WTC11 (cell line): ENCODE measurements at regions of chr2 and their contacts with region 1.

Region 1: GRCh38 chr2:230987137-230988020 is 8.5 kb upstream of the SPATA3 start:
- DNase-seq: peak; percentile 92
- ATAC-seq: peak; percentile 78
- H3K4me3 Mint-ChIP-seq: peak overlapping the region; percentile 61
- H3K27ac Mint-ChIP-seq: peak overlapping the region; percentile 58
- H3K4me1 Mint-ChIP-seq: peaks cover 24% of the 10 kb centered on the region
- H3K27me3 Mint-ChIP-seq: no peaks in the 10 kb centered on the region
- CTCF ChIP-seq: peak; percentile 93

Region 2: GRCh38 chr2:230824406-230824978 is 162.9 kb before region 1 on chr2:
- CTCF ChIA-PET with region 1: interaction called, 81 read pairs
- POLR2A ChIA-PET with region 1: interaction called, 3 read pairs
- DNase-seq: peak; percentile 59
- ATAC-seq: peak; percentile 89
- H3K4me3 Mint-ChIP-seq: no peak overlapping the region; the same call in 1 of the 2 replicates
- H3K27ac Mint-ChIP-seq: no peak overlapping the region
- H3K4me1 Mint-ChIP-seq: peaks cover 11% of the 10 kb centered on the region
- H3K27me3 Mint-ChIP-seq: peaks cover 5% of the 10 kb centered on the region; the same call in 1 of the 2 replicates
- CTCF ChIP-seq: peak; percentile 70

Region 3: GRCh38 chr2:230866756-230867523 is 120.4 kb before region 1 on chr2:
- CTCF ChIA-PET with region 1: interaction called, 17 read pairs
- POLR2A ChIA-PET with region 1: interaction called, 3 read pairs
- DNase-seq: no peak
- ATAC-seq: no peak
- H3K4me3 Mint-ChIP-seq: peak overlapping the region; percentile 88
- H3K27ac Mint-ChIP-seq: peak overlapping the region; percentile 96
- H3K4me1 Mint-ChIP-seq: peaks cover 76% of the 10 kb centered on the region
- H3K27me3 Mint-ChIP-seq: no peaks in the 10 kb centered on the region; the same call in 1 of the 2 replicates
- CTCF ChIP-seq: no peak

Region 4: GRCh38 chr2:230902180-230902899 is 85.0 kb before region 1 on chr2:
- CTCF ChIA-PET with region 1: interaction called, 85 read pairs
- POLR2A ChIA-PET with region 1: interaction called, 3 read pairs
- DNase-seq: peak; percentile 78
- ATAC-seq: peak; percentile 83
- H3K4me3 Mint-ChIP-seq: peak overlapping the region; percentile 42
- H3K27ac Mint-ChIP-seq: peak overlapping the region; percentile 71
- H3K4me1 Mint-ChIP-seq: peaks cover 60% of the 10 kb centered on the region
- H3K27me3 Mint-ChIP-seq: peaks cover 26% of the 10 kb centered on the region
- CTCF ChIP-seq: peak; percentile 71

Region 5: DNA sequence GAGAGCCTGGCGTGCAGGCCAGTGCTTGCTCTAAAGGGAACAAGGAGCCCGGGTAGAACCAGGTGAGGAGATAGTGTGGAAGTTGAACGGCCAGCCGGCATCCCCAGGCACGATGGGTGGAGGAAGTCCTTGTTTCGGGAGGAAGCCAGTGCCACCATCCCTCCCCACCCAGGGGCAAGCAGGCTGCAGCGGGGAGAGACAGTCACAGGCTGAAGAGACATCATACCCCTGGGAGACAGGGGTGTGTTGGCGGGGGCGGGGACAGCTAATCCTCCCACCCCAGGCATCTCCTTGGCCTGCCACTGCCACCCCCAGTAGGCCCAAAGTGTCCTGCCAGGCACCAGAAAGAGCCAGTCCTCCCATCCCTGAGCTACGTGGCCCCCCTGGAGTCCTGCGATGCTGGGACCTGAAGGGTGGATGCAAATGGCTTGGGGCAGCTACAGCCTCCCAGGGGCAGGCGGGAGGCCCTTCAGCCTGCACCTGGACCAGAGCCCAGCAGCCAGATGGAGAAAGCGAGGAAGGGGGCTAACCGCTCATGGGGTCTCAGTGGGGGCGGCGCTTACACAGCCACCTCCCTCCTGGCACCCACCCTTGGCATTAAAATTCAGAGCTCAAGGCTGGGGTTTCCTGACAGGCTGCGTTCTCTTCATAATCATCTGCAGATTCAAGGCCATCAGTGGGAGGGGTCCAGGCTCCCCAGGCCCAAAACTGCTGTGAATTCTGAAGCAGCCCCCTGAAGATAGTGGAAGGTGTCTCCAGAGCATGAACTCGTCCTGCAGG is 47.5 kb before region 1 on chr2:
- CTCF ChIA-PET with region 1: interaction called, 12 read pairs
- POLR2A ChIA-PET with region 1: no interaction called
- DNase-seq: no peak
- ATAC-seq: no peak
- H3K4me3 Mint-ChIP-seq: no peak overlapping the region
- H3K27ac Mint-ChIP-seq: no peak overlapping the region
- H3K4me1 Mint-ChIP-seq: 0 out of 2 replicates have a peak, but pooled peaks cover 5% of the 10 kb centered on the region
- H3K27me3 Mint-ChIP-seq: no peaks in the 10 kb centered on the region
- CTCF ChIP-seq: no peak

Region 6: GRCh38 chr2:231000211-231000904 is 13.0 kb after region 1 on chr2:
- CTCF ChIA-PET with region 1: interaction called, 10 read pairs
- POLR2A ChIA-PET with region 1: no interaction called
- DNase-seq: peak; percentile 72
- ATAC-seq: peak; percentile 97
- H3K4me3 Mint-ChIP-seq: no peak overlapping the region
- H3K27ac Mint-ChIP-seq: no peak overlapping the region
- H3K4me1 Mint-ChIP-seq: peaks cover 8% of the 10 kb centered on the region; the same call in 1 of the 2 replicates
- H3K27me3 Mint-ChIP-seq: peaks cover 18% of the 10 kb centered on the region
- CTCF ChIP-seq: no peak

Region 7: GRCh38 chr2:231029563-231029962 is 42.2 kb after region 1 on chr2:
- CTCF ChIA-PET with region 1: no interaction called
- POLR2A ChIA-PET with region 1: no interaction called
- DNase-seq: no peak
- ATAC-seq: no peak
- H3K4me3 Mint-ChIP-seq: no peak overlapping the region
- H3K27ac Mint-ChIP-seq: no peak overlapping the region
- H3K4me1 Mint-ChIP-seq: no peaks in the 10 kb centered on the region
- H3K27me3 Mint-ChIP-seq: peaks cover 30% of the 10 kb centered on the region
- CTCF ChIP-seq: no peak

Region 8: GRCh38 chr2:231212329-231212845 is 225.0 kb after region 1 on chr2:
- CTCF ChIA-PET with region 1: no interaction called
- POLR2A ChIA-PET with region 1: no interaction called
- DNase-seq: no peak
- ATAC-seq: no peak
- H3K4me3 Mint-ChIP-seq: no peak overlapping the region
- H3K27ac Mint-ChIP-seq: no peak overlapping the region; the same call in 1 of the 2 replicates
- H3K4me1 Mint-ChIP-seq: peaks cover 4% of the 10 kb centered on the region; the same call in 1 of the 2 replicates
- H3K27me3 Mint-ChIP-seq: no peaks in the 10 kb centered on the region
- CTCF ChIP-seq: no peak